ENCODE measurements at regions of chr6 and their contacts with region 1.

Region 1: DNA sequence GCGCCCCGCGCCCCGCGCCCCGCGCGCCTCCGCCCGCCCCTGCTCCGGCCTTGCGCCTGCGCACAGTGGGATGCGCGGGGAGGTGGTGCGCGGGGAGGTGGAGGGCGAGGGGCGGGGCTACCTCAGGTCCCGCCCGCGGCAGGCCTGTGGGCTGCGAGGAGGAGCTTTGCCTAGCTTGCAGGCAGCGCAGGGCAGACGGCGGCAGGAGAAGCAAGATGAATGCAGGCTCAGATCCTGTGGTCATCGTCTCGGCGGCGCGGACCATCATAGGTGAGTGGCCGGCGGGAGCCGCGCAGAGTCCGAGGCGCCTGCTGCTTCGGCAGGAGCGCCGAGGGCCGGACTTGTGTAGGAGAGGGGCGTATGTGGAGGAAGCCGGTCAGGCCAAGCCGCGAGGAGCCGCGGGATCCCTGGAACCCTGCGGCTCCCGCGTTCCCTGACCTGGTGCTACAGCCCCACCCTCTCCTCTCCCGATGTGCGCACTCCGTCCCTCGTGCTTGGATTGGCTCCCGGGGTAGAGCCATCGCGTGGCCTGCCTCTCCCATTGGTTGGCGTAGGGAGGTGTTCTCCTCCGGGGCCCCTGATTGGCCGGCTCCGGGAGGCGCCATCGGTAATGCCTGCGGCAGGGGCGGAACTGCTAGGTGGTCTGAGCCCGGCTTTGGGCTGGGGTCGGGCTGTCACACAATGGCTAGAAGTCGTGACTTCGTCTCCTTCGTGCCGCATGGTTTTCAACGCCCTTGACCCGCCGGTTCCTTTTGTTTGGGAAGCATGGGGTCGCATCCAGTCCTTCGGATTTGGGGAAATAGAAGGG is at the start of gene ACAT2:
- DNase-seq: peak; percentile 98 to 100 (median 99)
- ATAC-seq: peak; percentile 98
- H3K4me3 ChIP-seq: peak within 1 kb of the TSS; percentile 66
- H3K27ac ChIP-seq: peak within 1 kb of the TSS; percentile 87
- H3K4me1 ChIP-seq: peaks cover 16 to 26% of the 10 kb centered on the region in 2 experiments; a peak in 4 of 5 replicates
- H3K27me3 ChIP-seq: no peaks in the 10 kb centered on the region
- CTCF ChIP-seq: no peak
- EP300 ChIP-seq: 0 out of 2 replicates have a peak, but pooled peaks have one; percentile 1
- POLR2A ChIP-seq: peak; percentile 94
- RAD21 ChIP-seq: no peak
- polyA plus RNA-seq, gene ACAT2: 247 to 309 TPM

Region 2: DNA sequence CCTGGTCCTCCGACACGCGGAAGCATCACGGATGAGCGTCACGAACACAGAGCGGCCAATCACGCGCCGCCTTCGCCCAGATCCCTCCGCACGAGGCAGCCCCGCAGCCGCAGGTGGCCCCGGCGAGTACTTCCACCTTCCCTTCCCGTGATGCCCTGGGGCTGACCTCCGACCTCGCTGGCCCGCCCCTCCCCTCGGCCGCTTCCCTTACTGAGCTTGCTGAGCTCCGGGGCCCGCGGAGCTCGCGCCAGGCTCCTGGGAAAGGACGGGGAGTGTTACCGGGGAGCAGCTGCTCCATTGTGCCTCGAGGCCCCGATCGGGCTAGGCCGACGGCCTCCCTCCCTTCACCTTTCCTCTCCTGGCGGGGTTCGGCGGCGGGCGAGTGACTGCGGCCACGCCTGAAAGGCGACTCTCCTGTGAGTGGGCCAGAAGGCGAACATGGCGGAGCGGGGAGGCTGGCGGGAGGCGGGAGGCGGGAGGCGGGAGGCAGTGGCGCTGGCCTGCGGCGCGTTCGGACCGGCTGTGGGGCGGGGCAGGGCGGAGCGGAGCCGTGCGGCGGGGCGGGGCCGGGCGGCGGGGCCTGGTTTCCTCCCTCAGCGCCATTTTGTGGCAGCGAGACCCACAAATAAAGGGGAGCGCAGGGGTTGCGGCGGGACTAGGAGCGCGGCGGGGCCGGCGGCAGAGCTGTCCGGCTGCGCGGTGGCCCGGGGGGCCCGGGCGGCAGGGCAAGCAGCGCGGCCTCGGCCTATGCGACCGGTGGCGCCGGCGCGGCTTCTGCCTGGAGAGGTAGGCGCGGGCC is 35.0 kb before region 1 on chr6 and contains the start of gene WTAP:
- CTCF ChIA-PET with region 1: no interaction called
- POLR2A ChIA-PET with region 1: interaction called, 14 read pairs
- in situ Hi-C with region 1: no loop called
- intact Hi-C with region 1: loop called (anchors 1 kb)
- DNase-seq: peak; percentile 94 to 99 (median 95)
- ATAC-seq: peak; percentile 89
- H3K4me3 ChIP-seq: peak within 1 kb of the TSS; percentile 88
- H3K27ac ChIP-seq: peak within 1 kb of the TSS; percentile 98
- H3K4me1 ChIP-seq: peaks cover 6 to 10% of the 10 kb centered on the region in 2 experiments; a peak in 4 of 5 replicates
- H3K27me3 ChIP-seq: no peaks in the 10 kb centered on the region
- CTCF ChIP-seq: no peak
- EP300 ChIP-seq: no peak; the same call in none of the 2 replicates
- POLR2A ChIP-seq: peak; percentile 100
- RAD21 ChIP-seq: no peak
- polyA plus RNA-seq, gene WTAP: 73.9 to 115 TPM

Region 3: DNA sequence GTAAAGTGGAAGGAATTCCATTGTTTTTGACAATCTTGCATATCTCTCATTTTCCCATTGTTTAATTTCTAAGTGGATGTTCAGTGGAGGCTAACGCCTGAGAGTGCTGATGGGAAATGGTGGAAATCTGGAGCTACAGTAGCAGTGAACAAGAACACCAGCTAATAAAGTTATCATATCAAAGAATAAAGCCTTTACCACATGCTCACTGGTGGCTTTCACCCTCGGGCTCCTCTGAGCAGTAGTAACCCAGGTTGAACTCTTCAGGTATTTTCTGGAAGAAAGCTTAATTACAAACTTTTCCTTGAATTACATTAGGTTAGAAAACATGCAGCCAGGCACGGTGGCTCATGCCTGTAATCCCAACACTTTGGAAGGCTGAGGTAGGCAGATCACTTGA is 10.6 kb before region 1 on chr6:
- CTCF ChIA-PET with region 1: no interaction called
- POLR2A ChIA-PET with region 1: interaction called, 10 read pairs
- in situ Hi-C with region 1: no loop called
- intact Hi-C with region 1: no loop called
- DNase-seq: no peak
- ATAC-seq: no peak
- H3K4me3 ChIP-seq: no peak overlapping the region
- H3K27ac ChIP-seq: no peak overlapping the region
- H3K4me1 ChIP-seq: no peaks in the 10 kb centered on the region
- H3K27me3 ChIP-seq: no peaks in the 10 kb centered on the region
- CTCF ChIP-seq: no peak
- EP300 ChIP-seq: no peak
- POLR2A ChIP-seq: no peak
- RAD21 ChIP-seq: no peak

Region 4: GRCh38 chr6:159777240-159777904 is 15.3 kb after region 1 on chr6:
- CTCF ChIA-PET with region 1: no interaction called
- POLR2A ChIA-PET with region 1: interaction called, 12 read pairs
- in situ Hi-C with region 1: no loop called
- intact Hi-C with region 1: no loop called
- DNase-seq: peak in 1 of 4 experiments; percentile 7
- ATAC-seq: peak; percentile 55
- H3K4me3 ChIP-seq: no peak overlapping the region
- H3K27ac ChIP-seq: no peak overlapping the region
- H3K4me1 ChIP-seq: no peaks in the 10 kb centered on the region
- H3K27me3 ChIP-seq: no peaks in the 10 kb centered on the region
- CTCF ChIP-seq: no peak
- EP300 ChIP-seq: no peak
- POLR2A ChIP-seq: peak; percentile 76
- RAD21 ChIP-seq: no peak

Measured in K562 (cell line).